ENCODE measurements at regions of chr6 and their contacts with region 1.

Region 1: GRCh38 chr6:159042003-159042825 is 2.6 kb downstream of the TAGAP start:
- DNase-seq: peak; percentile 91
- H3K4me3 ChIP-seq: peak overlapping the region; percentile 95
- H3K27ac ChIP-seq: peak overlapping the region; percentile 96
- H3K4me1 ChIP-seq: peaks cover 73% of the 10 kb centered on the region
- CTCF ChIP-seq: peak; percentile 100

Region 2: GRCh38 chr6:158649289-158650143 is 392.7 kb before region 1 on chr6 and contains the start of gene SYTL3:
- CTCF ChIA-PET with region 1: no interaction called
- POLR2A ChIA-PET with region 1: no interaction called
- intact Hi-C with region 1: no loop called
- DNase-seq: peak; percentile 41
- H3K4me3 ChIP-seq: no peak within 1 kb of the TSS
- H3K27ac ChIP-seq: no peak within 1 kb of the TSS
- H3K4me1 ChIP-seq: peaks cover 13% of the 10 kb centered on the region
- CTCF ChIP-seq: no peak
- total RNA-seq, gene SYTL3: 0.32 TPM in 1 of 2 replicates, not detected in the other

Region 3: DNA sequence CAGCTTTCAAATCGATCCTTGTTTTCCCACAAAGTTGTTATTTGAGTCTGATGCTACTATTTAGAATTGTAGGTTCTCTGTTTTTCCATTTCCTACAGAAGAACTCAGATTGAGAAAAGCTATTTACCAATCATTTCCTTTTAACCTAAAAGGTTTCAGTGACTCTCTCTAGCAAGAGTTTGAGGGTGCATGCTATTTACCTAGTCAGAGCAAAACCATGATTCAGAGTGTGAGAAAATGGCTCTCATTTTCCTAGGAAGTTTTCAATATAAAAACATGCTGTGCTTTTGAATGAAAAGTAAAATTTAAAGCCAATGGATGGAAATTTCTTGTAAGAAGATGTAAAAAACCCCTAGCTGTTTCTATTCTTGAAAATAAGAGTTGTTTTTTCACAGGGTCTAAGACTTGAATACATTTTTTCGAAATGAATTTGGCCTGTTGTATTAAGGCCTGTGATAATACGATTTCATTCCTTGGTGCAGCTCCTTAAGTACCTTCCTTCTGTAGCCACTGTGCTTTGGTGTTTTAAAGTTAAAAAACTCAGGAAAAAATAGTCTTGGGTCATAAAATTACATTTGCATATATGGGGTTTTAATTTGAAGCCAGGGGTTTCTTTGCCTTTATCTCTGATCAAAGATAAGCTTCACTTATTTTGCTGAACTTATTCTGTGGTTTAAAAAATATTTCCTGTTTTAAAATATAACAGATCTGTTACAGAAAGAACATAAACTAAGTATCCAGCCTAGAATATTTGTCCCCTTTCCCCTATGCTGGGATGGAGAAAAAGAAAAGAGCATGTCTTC is 24.3 kb before region 1 on chr6:
- CTCF ChIA-PET with region 1: no interaction called
- POLR2A ChIA-PET with region 1: interaction called, 6 read pairs
- intact Hi-C with region 1: loop called (anchors 1 kb)
- DNase-seq: no peak
- H3K4me3 ChIP-seq: no peak overlapping the region
- H3K27ac ChIP-seq: peak overlapping the region; percentile 88
- H3K4me1 ChIP-seq: peaks cover 59% of the 10 kb centered on the region
- CTCF ChIP-seq: no peak

Region 4: GRCh38 chr6:159062564-159062945 is 20.3 kb after region 1 on chr6:
- CTCF ChIA-PET with region 1: interaction called, 3 read pairs
- POLR2A ChIA-PET with region 1: interaction called, 17 read pairs
- intact Hi-C with region 1: no loop called
- DNase-seq: peak; percentile 49
- H3K4me3 ChIP-seq: peak overlapping the region; percentile 4
- H3K27ac ChIP-seq: peak overlapping the region; percentile 53
- H3K4me1 ChIP-seq: peaks cover 31% of the 10 kb centered on the region
- CTCF ChIP-seq: no peak

Region 5: GRCh38 chr6:159094444-159095252 is 52.4 kb after region 1 on chr6:
- CTCF ChIA-PET with region 1: interaction called, 3 read pairs
- POLR2A ChIA-PET with region 1: interaction called, 36 read pairs
- intact Hi-C with region 1: loop called (anchors 2 kb)
- DNase-seq: peak; percentile 96
- H3K4me3 ChIP-seq: peak overlapping the region; percentile 56
- H3K27ac ChIP-seq: peak overlapping the region; percentile 87
- H3K4me1 ChIP-seq: peaks cover 70% of the 10 kb centered on the region
- CTCF ChIP-seq: no peak

Region 6: GRCh38 chr6:159110013-159110412 is 67.8 kb after region 1 on chr6:
- CTCF ChIA-PET with region 1: interaction called, 22 read pairs
- POLR2A ChIA-PET with region 1: interaction called, 68 read pairs
- intact Hi-C with region 1: no loop called
- DNase-seq: peak; percentile 60
- H3K4me3 ChIP-seq: no peak overlapping the region
- H3K27ac ChIP-seq: peak overlapping the region; percentile 97
- H3K4me1 ChIP-seq: peaks cover 83% of the 10 kb centered on the region
- CTCF ChIP-seq: peak; percentile 89

Region 7: DNA sequence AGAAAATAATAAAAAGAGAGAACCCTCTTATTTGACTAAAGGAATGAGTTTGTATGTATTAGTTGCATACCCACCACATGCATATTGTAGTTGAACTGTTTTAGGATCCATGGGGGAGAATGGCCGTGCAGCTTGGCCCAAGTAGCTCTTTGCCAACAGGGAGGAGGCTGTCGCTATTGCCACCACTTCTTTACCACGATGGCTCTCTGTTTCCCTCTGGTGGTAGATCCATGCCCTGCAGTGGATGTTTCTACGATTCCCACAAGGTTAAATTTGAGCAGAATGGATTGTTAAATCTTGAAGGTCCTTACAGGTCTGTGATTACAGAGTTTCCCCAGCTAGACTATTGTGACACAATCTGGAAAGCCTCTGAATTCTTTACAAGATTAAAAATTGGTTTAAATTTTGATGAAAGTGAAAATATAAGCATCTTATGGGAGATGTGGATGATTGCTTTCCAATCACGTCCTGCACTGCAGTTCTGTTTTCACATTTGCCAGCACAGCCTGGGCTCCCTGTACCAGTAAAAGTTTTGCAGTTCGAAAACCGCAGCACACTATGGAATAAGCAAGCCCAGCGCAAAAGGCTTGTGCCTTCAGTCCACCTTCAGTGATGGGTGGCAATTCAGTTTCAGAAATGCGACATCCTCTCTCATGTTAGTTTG is 92.6 kb after region 1 on chr6:
- CTCF ChIA-PET with region 1: interaction called, 11 read pairs
- POLR2A ChIA-PET with region 1: interaction called, 8 read pairs
- intact Hi-C with region 1: loop called (anchors 1 kb)
- DNase-seq: peak; percentile 88
- H3K4me3 ChIP-seq: peak overlapping the region; percentile 4
- H3K27ac ChIP-seq: no peak overlapping the region
- H3K4me1 ChIP-seq: peaks cover 52% of the 10 kb centered on the region
- CTCF ChIP-seq: peak; percentile 100